ENCODE measurements at regions of chr20 and their contacts with region 1.

Region 1: GRCh38 chr20:50421356-50422277 is 88.6 kb upstream of the PTPN1 start:
- DNase-seq: no peak
- H3K4me3 ChIP-seq: no peak overlapping the region
- H3K27ac ChIP-seq: peak overlapping the region; percentile 64 to 67
- H3K4me1 ChIP-seq: peaks cover 7 to 18% of the 10 kb centered on the region in 2 donors
- H3K27me3 ChIP-seq: no peaks in the 10 kb centered on the region
- CTCF ChIP-seq: no peak

Region 2: GRCh38 chr20:49999329-49999728 is 422.3 kb before region 1 on chr20:
- intact Hi-C with region 1: no loop called
- DNase-seq: no peak
- H3K4me3 ChIP-seq: no peak overlapping the region
- H3K27ac ChIP-seq: no peak overlapping the region
- H3K4me1 ChIP-seq: no peaks in the 10 kb centered on the region
- H3K27me3 ChIP-seq: no peaks in the 10 kb centered on the region
- CTCF ChIP-seq: no peak

Region 3: DNA sequence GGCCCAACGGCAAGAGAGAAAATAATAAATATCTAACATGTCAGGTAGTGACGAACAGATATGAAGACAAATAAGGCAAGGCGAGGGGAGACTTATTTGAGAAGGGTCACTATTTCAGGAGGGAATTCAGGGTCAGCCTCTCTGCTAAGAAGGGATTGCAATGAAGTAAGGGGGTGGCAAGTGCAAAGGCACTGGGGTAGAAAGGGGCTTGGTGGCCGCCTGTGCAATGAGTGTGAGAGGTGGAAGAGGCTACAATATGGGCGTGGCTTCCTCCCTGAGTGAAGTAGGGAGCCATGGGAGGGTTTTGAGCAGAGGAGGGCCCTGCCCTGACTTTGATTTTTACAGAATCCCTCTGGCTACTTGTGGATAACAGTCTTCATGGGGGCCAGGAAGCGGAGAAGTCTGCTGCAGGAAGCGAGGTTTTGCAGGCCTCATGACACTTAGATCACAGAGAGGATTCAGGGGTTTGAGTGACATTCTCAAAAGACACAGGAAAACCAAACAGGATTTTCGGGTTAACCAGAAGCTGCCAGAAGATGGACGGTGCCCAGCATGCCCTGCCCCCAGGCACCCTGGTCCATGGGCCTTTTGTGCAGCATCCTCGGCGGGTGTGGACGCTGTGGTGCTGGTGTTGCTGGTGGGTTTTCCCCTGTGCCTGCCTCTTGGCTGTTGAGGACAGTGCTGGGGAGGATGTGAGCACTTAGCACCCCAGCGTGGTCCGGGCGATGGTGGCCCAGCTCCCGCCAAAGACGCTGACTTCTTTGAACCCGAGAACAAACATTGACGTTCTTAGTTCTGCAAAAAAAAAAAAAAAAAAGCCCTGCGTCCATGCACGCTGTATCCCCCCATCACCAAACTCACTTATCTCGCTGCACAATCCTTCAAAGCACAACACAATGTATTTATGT is 35.6 kb before region 1 on chr20:
- intact Hi-C with region 1: loop called (anchors 5 kb)
- DNase-seq: no peak
- H3K4me3 ChIP-seq: no peak overlapping the region
- H3K27ac ChIP-seq: no peak overlapping the region
- H3K4me1 ChIP-seq: peaks cover 9 to 47% of the 10 kb centered on the region in 2 donors
- H3K27me3 ChIP-seq: no peaks in the 10 kb centered on the region
- CTCF ChIP-seq: no peak

Region 4: DNA sequence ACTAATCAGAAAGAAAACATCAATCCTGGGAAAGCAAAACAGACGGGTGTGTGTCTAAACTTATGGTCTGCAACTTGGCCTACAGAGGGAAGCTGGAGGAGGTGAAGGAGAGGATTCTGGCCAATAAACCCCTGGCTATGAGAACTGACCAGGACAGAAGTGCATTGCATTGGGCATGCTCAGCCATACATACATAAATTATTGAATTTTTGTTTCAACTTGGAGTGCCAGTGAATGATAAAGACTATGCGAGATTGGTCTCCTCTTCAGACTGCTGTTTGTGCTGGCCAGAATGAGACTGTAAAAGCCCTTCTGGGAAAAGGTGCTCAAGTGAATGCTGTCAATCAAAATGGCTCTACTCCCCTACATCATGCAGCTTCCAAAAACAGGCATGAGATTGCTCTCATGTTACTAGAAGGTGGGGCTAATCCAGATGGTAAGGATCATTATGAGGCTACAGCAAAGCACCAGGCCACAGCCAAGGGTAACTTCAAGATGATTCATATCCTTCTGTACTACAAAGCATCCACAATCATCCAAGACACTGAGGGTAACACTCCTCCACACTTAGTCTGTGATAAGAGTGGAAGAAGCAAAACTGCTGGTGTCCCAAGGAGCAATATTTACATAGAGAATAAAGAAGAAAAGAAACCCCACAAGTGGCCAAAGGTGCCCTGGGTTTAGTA is 492.2 kb after region 1 on chr20:
- intact Hi-C with region 1: no loop called
- DNase-seq: no peak
- H3K4me3 ChIP-seq: no peak overlapping the region
- H3K27ac ChIP-seq: no peak overlapping the region
- H3K4me1 ChIP-seq: peaks cover 0 to 54% of the 10 kb centered on the region in 2 donors
- H3K27me3 ChIP-seq: no peaks in the 10 kb centered on the region
- CTCF ChIP-seq: no peak